ENCODE measurements at regions of chr4 and their contacts with region 1.

Region 1: GRCh38 chr4:185020293-185020808 is 2.1 kb downstream of the HELT start:
- DNase-seq: peak; percentile 31
- ATAC-seq: no peak
- H3K4me3 Mint-ChIP-seq: no peak overlapping the region
- H3K27ac Mint-ChIP-seq: no peak overlapping the region
- H3K4me1 Mint-ChIP-seq: peaks cover 9% of the 10 kb centered on the region
- H3K27me3 Mint-ChIP-seq: peaks cover 68% of the 10 kb centered on the region

Region 2: GRCh38 chr4:183905081-183905592 is 1115.2 kb before region 1 on chr4 and contains the start of gene STOX2:
- CTCF ChIA-PET with region 1: no interaction called
- POLR2A ChIA-PET with region 1: no interaction called
- intact Hi-C with region 1: loop called in 1 of 2 experiments (anchors 5 kb)
- DNase-seq: peak; percentile 52
- ATAC-seq: peak; percentile 65
- H3K4me3 Mint-ChIP-seq: peak within 1 kb of the TSS; percentile 32
- H3K27ac Mint-ChIP-seq: no peak within 1 kb of the TSS
- H3K4me1 Mint-ChIP-seq: peaks cover 2% of the 10 kb centered on the region
- H3K27me3 Mint-ChIP-seq: peaks cover 53% of the 10 kb centered on the region
- total RNA-seq, gene STOX2: not detected

Region 3: GRCh38 chr4:184282251-184282713 is 738.1 kb before region 1 on chr4:
- CTCF ChIA-PET with region 1: no interaction called
- POLR2A ChIA-PET with region 1: no interaction called
- intact Hi-C with region 1: no loop called
- DNase-seq: peak; percentile 82
- ATAC-seq: peak; percentile 74
- H3K4me3 Mint-ChIP-seq: peak overlapping the region; percentile 56
- H3K27ac Mint-ChIP-seq: peak overlapping the region; percentile 93
- H3K4me1 Mint-ChIP-seq: peaks cover 65% of the 10 kb centered on the region
- H3K27me3 Mint-ChIP-seq: peaks cover 4% of the 10 kb centered on the region

Region 4: DNA sequence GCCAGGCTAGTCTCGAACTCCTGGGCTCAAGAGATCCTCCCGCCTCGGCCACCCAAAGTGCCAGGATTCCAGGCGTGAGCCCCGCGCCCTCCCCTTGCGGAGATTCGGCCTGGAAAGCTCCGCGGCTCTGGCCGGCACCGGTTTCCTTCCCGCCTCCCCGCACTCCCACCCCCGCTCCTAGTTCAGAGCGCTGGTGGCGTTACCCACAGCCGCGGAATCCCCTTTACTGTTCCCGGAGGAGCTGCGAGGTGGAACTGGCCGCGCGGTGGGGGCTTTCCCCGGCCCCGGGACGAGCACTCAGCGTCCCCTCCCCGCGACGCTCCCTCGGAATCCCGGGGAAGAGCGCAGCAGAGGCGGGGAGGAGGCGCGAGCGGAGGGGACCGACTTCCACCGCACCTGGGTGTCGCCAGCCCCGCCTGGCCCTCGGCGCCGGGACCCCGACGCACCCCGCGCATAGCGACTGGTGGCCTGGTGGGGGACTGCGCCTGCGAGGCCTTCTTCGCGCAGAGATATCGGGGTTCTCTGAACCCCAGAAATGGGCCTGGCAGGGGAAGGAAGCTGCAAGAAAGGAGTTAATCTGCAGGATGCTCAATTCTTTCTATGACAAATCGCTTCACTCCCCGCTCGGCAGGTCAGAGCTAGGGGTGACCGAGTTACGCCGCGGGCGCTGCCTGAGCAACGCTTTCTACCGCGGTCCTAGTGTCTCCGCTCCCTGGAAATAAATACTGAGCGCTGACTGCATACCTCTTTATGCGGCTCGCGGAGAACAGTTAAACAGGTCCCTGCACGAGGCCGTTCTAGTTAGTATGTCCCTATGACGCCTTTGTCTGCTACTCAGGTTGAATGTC is 108.1 kb after region 1 on chr4:
- CTCF ChIA-PET with region 1: no interaction called
- POLR2A ChIA-PET with region 1: no interaction called
- intact Hi-C with region 1: loop called (anchors 5 kb)
- DNase-seq: peak; percentile 54
- ATAC-seq: peak; percentile 75
- H3K4me3 Mint-ChIP-seq: peak overlapping the region; percentile 53
- H3K27ac Mint-ChIP-seq: no peak overlapping the region
- H3K4me1 Mint-ChIP-seq: peaks cover 9% of the 10 kb centered on the region
- H3K27me3 Mint-ChIP-seq: peaks cover 33% of the 10 kb centered on the region

Region 5: GRCh38 chr4:185134307-185134869 is 114.0 kb after region 1 on chr4:
- CTCF ChIA-PET with region 1: interaction called, 3 read pairs
- POLR2A ChIA-PET with region 1: no interaction called
- intact Hi-C with region 1: loop called (anchors 5 kb)
- DNase-seq: no peak
- ATAC-seq: peak; percentile 70
- H3K4me3 Mint-ChIP-seq: no peak overlapping the region
- H3K27ac Mint-ChIP-seq: no peak overlapping the region
- H3K4me1 Mint-ChIP-seq: no peaks in the 10 kb centered on the region
- H3K27me3 Mint-ChIP-seq: peaks cover 28% of the 10 kb centered on the region

Region 6: DNA sequence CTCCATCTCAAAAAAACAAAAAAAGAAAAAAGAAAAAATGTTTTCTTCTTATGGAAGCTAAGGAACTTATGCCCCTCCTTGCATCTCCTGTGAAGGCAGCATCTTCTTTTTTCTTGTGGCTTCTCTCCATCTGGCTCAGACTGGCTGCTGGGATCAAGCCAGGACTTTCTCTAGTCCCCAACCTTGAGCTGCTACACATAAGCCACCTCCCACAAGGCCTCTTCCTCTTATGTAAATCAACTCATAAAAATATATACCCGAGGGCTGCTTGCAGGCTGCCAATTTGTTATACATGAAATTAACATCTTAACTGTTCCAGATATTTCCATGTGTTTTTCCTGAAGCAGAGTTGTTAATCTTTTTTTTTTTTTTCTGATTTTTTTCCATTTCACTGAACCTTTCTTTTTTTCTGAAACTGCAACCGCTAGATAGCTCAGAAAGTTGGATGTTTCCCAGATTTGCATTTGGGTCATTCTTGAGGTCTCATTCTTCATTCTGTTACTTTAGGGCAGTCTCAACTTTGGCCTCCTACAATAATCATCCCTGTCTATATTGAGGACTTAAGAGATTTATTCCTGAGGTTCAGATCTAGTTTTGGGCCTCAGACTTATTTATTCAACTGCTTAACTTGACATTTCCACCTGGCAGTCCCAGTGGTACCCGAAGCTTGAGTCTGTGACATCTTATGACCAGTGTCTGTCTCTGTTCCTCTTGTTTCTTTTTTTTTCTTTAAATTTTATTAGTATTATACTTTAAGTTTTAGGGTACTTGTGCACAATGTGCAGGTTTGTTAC is 199.4 kb after region 1 on chr4:
- CTCF ChIA-PET with region 1: no interaction called
- POLR2A ChIA-PET with region 1: no interaction called
- intact Hi-C with region 1: no loop called
- DNase-seq: no peak
- ATAC-seq: no peak
- H3K4me3 Mint-ChIP-seq: no peak overlapping the region
- H3K27ac Mint-ChIP-seq: no peak overlapping the region
- H3K4me1 Mint-ChIP-seq: peaks cover 16% of the 10 kb centered on the region
- H3K27me3 Mint-ChIP-seq: no peaks in the 10 kb centered on the region

Region 7: DNA sequence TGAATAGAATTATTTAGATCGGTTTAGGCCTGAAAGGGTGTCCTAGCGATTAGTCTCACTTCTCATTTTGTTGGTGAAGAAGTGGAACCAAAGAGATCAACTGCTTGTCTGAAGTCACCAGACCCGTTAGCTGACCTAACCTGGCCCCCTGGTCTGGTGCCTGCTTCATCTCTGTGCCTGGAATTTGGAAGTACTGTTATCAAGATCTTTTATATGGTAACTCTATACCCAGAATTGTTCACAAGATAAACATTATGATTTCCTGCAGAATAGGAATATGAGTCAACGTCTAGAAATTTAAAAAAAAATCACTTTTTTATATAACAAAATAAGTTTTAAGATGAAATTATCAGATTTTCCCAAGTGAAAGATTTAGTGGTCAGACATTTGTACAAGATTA is 338.2 kb after region 1 on chr4:
- CTCF ChIA-PET with region 1: no interaction called
- POLR2A ChIA-PET with region 1: no interaction called
- intact Hi-C with region 1: no loop called
- DNase-seq: no peak
- ATAC-seq: no peak
- H3K4me3 Mint-ChIP-seq: no peak overlapping the region
- H3K27ac Mint-ChIP-seq: no peak overlapping the region
- H3K4me1 Mint-ChIP-seq: peaks cover 8% of the 10 kb centered on the region
- H3K27me3 Mint-ChIP-seq: no peaks in the 10 kb centered on the region

Region 8: DNA sequence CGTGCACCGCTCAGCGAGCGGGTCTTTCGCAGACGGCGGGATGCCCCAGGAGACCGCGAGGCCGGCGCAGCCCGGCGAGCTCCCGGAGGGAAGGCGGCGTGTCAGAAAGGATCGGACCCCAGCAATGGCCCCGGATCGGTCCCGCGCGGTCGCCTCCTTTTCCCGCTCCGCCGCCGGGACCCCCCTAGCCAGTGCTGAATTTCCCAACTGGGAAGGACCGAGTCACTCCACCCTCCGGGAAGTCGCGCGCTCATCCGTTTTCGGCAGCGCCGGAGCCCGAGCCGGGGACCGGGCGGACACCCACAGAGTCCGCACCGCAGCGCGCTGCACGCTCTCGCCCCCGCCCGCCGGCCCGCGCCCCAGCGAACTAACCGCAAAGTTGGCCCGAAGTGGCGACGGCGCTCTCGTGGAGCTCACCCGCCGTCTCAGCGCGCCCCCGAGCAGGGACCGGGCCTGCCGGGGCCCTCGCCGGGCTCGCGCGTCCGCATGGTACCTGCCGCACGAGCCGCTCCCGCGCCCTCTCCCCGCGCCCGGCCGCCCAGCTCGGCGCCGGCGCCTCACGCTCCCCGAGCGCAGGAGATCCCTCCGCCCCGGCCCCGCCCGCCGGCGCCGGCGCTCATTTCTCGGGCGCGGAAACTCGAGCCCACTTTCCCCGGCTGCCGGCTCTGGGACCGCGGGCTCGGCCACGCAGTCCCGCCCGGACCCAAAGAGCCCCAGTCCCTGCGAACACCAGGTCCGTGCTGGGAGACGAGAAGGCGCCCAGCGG is 1703.1 kb after region 1 on chr4 and contains the start of gene FAT1:
- CTCF ChIA-PET with region 1: no interaction called
- POLR2A ChIA-PET with region 1: no interaction called
- intact Hi-C with region 1: loop called in 1 of 2 experiments (anchors 5 kb)
- DNase-seq: peak; percentile 36
- ATAC-seq: no peak
- H3K4me3 Mint-ChIP-seq: peak within 1 kb of the TSS; percentile 49
- H3K27ac Mint-ChIP-seq: no peak within 1 kb of the TSS
- H3K4me1 Mint-ChIP-seq: peaks cover 19% of the 10 kb centered on the region
- H3K27me3 Mint-ChIP-seq: peaks cover 53% of the 10 kb centered on the region
- total RNA-seq, gene FAT1: 0.02 to 0.05 TPM